Psoas muscle (tissue), 8 donors: ENCODE measurements at regions of chr1 and their contacts with region 1.

Region 1: GRCh38 chr1:75785983-75786853 is at the start of gene RABGGTB:
- DNase-seq: peak; percentile 93 to 97
- ATAC-seq: peak; percentile 95 to 99 (median 99)
- H3K4me3 ChIP-seq: peak within 1 kb of the TSS; percentile 89
- H3K27ac ChIP-seq: peak within 1 kb of the TSS; percentile 97
- H3K4me1 ChIP-seq: peaks cover 34% of the 10 kb centered on the region
- H3K27me3 ChIP-seq: no peaks in the 10 kb centered on the region
- CTCF ChIP-seq: no peak
- total RNA-seq, gene RABGGTB: 53.9 to 101 (median 80.2) TPM

Region 2: GRCh38 chr1:75672528-75673393 is 113.5 kb before region 1 on chr1:
- intact Hi-C with region 1: no loop called
- DNase-seq: no peak
- ATAC-seq: no peak
- H3K4me3 ChIP-seq: no peak overlapping the region
- H3K27ac ChIP-seq: no peak overlapping the region
- H3K4me1 ChIP-seq: no peaks in the 10 kb centered on the region
- H3K27me3 ChIP-seq: no peaks in the 10 kb centered on the region
- CTCF ChIP-seq: no peak

Region 3: DNA sequence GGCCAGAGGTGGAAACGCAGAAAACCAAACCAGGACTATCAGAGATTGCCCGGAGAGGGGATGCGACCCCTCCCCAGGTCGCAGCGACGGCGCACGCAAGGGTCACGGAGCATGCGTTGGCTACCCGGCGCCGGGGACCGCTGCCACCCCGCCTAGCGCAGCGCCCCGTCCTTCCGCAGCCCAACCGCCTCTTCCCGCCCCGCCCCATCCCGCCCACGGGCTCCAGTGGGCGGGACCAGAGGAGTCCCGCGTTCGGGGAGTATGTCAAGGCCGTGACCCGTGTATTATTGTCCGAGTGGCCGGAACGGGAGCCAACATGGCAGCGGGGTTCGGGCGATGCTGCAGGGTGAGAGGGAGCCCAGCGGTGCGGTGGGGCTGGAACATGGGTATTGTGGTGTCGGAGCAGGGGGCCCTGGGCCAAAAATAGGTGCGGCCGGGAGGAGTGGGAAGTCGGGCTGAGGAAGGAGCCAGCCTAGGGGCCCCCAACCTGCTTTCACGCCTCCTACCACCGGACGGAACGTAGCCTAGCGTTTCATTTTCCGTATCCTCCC is 61.7 kb before region 1 on chr1 and contains the start of gene ACADM:
- intact Hi-C with region 1: loop called (anchors 2 to 5 kb)
- DNase-seq: peak; percentile 91 to 93
- ATAC-seq: peak; percentile 96 to 98 (median 97)
- H3K4me3 ChIP-seq: peak within 1 kb of the TSS; percentile 96
- H3K27ac ChIP-seq: peak within 1 kb of the TSS; percentile 92
- H3K4me1 ChIP-seq: peaks cover 32% of the 10 kb centered on the region
- H3K27me3 ChIP-seq: no peaks in the 10 kb centered on the region
- CTCF ChIP-seq: no peak
- total RNA-seq, gene ACADM: 156 to 203 (median 171) TPM